ENCODE measurements at regions of chr22 and their contacts with region 1.

Region 1: GRCh38 chr22:35430897-35431322 is 31.0 kb downstream of the MCM5 start:
- DNase-seq: peak; percentile 75 to 93
- H3K4me3 ChIP-seq: no peak overlapping the region
- H3K27ac ChIP-seq: no peak overlapping the region
- H3K4me1 ChIP-seq: peaks cover 24% of the 10 kb centered on the region
- H3K27me3 ChIP-seq: no peaks in the 10 kb centered on the region
- CTCF ChIP-seq: peak; percentile 98

Region 2: GRCh38 chr22:35357883-35358621 is 72.9 kb before region 1 on chr22:
- CTCF ChIA-PET with region 1: no interaction called
- POLR2A ChIA-PET with region 1: no interaction called
- intact Hi-C with region 1: loop called (anchors 2 kb)
- DNase-seq: peak; percentile 78 to 98
- H3K4me3 ChIP-seq: no peak overlapping the region
- H3K27ac ChIP-seq: peak overlapping the region; percentile 74
- H3K4me1 ChIP-seq: peaks cover 8% of the 10 kb centered on the region
- H3K27me3 ChIP-seq: no peaks in the 10 kb centered on the region
- CTCF ChIP-seq: no peak

Region 3: DNA sequence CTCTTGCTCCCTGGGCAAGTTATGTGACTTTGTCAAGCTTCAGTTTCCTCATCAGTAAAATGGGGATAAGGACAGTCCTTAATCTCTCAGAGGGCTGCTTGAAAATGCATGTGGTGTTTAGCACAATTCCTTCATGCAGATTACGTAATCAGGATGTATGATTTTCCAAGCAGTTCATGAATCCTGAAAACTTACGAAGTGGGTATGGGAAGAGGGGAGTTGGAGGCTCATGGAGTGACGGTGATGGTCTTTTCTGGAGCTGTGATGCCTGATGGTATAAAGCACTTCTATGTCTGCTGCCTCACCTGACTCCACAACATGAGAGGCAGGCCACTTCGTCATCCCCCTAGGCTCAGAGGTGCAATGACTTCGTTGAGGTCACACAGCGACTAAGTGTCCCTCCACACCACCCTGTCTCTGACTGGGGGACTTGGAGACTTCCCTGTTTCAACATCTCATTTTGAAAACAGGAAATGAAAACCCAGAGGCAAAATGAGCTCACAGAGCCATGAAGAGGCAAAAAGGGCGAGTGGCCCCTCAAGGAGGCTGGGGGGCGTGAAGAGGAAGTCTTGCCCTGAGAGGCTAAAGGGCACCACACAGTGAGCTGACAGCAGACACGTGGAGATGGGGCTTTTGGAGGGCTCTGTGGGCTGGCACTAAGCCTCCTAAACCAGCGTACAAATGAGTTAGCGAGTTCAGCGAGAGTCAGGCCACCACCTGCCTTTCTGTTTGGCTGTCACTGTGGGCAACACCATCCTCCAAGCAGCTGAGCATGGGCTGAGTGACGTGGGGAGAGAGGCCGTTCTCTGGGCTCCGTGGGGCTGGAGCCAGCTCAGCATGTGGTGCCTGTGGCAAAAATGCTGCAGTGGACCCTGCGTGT is 20.9 kb before region 1 on chr22:
- CTCF ChIA-PET with region 1: no interaction called
- POLR2A ChIA-PET with region 1: no interaction called
- intact Hi-C with region 1: no loop called
- DNase-seq: no peak
- H3K4me3 ChIP-seq: no peak overlapping the region
- H3K27ac ChIP-seq: no peak overlapping the region
- H3K4me1 ChIP-seq: no peaks in the 10 kb centered on the region
- H3K27me3 ChIP-seq: no peaks in the 10 kb centered on the region
- CTCF ChIP-seq: no peak

Region 4: GRCh38 chr22:35582861-35583670 is 152.2 kb after region 1 on chr22:
- CTCF ChIA-PET with region 1: interaction called, 3 read pairs
- POLR2A ChIA-PET with region 1: no interaction called
- intact Hi-C with region 1: loop called (anchors 1 kb)
- DNase-seq: peak; percentile 61 to 62
- H3K4me3 ChIP-seq: peak overlapping the region; percentile 39
- H3K27ac ChIP-seq: peak overlapping the region; percentile 39; the same call in 1 of the 2 replicates
- H3K4me1 ChIP-seq: peaks cover 56% of the 10 kb centered on the region
- H3K27me3 ChIP-seq: no peaks in the 10 kb centered on the region
- CTCF ChIP-seq: peak; percentile 97

Region 5: GRCh38 chr22:35622191-35622913 is 191.4 kb after region 1 on chr22:
- CTCF ChIA-PET with region 1: interaction called, 7 read pairs
- POLR2A ChIA-PET with region 1: interaction called, 13 read pairs
- intact Hi-C with region 1: loop called (anchors 1 kb)
- DNase-seq: peak; percentile 96 to 99
- H3K4me3 ChIP-seq: peak overlapping the region; percentile 48; the same call in 1 of the 2 replicates
- H3K27ac ChIP-seq: peak overlapping the region; percentile 83
- H3K4me1 ChIP-seq: peaks cover 44% of the 10 kb centered on the region
- H3K27me3 ChIP-seq: no peaks in the 10 kb centered on the region
- CTCF ChIP-seq: no peak

Region 6: GRCh38 chr22:36065775-36066559 is 635.1 kb after region 1 on chr22:
- CTCF ChIA-PET with region 1: no interaction called
- POLR2A ChIA-PET with region 1: no interaction called
- intact Hi-C with region 1: loop called (anchors 2 kb)
- DNase-seq: peak; percentile 88 to 95
- H3K4me3 ChIP-seq: peak overlapping the region; percentile 76
- H3K27ac ChIP-seq: peak overlapping the region; percentile 71
- H3K4me1 ChIP-seq: peaks cover 12% of the 10 kb centered on the region
- H3K27me3 ChIP-seq: no peaks in the 10 kb centered on the region
- CTCF ChIP-seq: peak; percentile 100